Caco-2 (cell line): ENCODE measurements at regions of chr19 and their contacts with region 1.

Region 1: DNA sequence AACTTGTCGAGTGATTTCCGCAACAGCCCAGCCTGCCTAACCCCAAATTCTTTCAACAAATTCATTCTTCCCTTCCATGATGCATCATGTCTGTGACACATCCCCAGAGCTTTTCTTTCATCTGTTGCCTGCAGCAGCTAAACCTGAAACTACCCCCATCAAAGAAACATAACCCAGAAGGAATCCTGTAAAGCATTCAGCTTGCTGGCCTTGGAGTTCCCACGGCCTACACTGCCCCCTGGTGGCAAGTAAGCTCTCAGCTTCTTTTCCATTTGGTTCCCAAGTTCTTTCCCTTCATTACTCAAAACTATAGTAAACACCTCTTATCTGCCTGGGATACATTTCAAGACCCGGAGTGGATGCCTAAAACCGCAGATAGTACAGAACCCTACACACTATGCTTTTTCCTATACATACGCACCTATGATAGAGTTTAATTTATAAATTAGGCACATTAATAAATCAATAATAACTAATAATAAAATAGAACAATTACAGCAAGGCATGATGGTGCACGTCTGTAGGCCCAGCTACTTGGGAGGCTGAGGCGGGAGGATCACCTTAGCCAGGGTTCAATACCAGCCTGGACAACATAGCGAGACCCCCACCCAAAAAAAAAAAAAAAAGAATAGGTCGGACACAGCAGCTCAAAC is 7.4 kb downstream of the ETHE1 start:
- DNase-seq: peak; percentile 83 to 89
- H3K4me3 ChIP-seq: no peak overlapping the region
- H3K4me3 Mint-ChIP-seq: no peak overlapping the region
- H3K27ac Mint-ChIP-seq: peak overlapping the region; percentile 35
- H3K4me1 ChIP-seq: peaks cover 12% of the 10 kb centered on the region
- H3K4me1 Mint-ChIP-seq: peaks cover 14% of the 10 kb centered on the region
- H3K27me3 ChIP-seq: no peaks in the 10 kb centered on the region
- H3K27me3 Mint-ChIP-seq: no peaks in the 10 kb centered on the region
- CTCF ChIP-seq: peak; percentile 91

Region 2: DNA sequence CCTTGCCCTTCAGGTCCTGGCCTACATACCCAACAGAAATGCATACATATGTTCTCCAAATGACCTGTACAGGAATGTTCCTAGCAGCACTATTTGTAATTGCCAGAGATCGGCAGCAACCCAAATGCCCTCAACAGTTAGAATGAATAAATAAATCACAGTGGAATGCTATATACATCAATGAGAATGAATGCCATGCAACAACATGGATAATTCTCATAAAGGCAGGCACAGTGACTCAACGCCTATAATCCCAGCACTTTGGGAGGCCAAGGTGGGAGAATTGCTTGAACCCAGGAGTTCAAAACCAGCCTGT is 86.2 kb before region 1 on chr19:
- CTCF ChIA-PET with region 1: interaction called, 14 read pairs
- POLR2A ChIA-PET with region 1: no interaction called
- intact Hi-C with region 1: loop called (anchors 1 kb)
- DNase-seq: no peak
- H3K4me3 ChIP-seq: no peak overlapping the region
- H3K4me3 Mint-ChIP-seq: no peak overlapping the region
- H3K27ac Mint-ChIP-seq: no peak overlapping the region
- H3K4me1 ChIP-seq: no peaks in the 10 kb centered on the region
- H3K4me1 Mint-ChIP-seq: no peaks in the 10 kb centered on the region
- H3K27me3 ChIP-seq: no peaks in the 10 kb centered on the region
- H3K27me3 Mint-ChIP-seq: no peaks in the 10 kb centered on the region
- CTCF ChIP-seq: no peak

Region 3: DNA sequence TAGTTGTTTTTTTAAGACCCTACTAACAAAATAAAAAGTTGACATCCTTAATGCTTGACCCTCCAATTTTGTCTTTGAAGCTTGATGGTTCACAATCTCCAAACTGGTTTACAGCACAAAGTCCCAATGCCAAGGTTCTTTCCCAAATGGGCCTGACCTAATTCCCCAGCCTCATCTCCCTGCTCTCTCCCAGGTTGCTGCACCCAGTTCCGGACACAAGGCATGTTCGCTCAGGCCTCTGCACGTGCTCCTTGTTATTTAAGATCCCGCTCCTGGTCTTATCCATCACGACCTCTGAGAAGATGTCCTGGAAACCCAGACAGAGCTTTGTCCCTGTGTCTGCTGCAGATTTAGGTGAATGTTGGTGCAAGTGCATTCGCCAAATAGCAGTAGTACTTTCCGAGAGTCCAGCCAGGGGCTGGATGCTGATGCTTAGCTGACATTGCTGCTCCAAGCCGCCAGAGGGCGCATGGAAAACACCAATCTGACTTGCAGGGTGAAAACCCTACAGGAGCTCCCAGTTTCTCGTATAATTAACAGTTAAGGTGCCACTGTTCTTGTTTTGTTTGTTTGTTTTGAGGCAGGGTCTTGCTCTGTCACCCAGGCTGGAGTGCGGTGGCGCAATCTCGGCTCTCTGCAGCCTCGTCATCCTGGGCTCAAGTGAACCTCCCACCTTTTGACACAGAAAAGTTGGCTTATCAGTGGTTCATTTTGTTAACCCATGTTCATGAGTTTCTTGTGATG is 72.6 kb before region 1 on chr19:
- CTCF ChIA-PET with region 1: interaction called, 181 read pairs
- POLR2A ChIA-PET with region 1: interaction called, 8 read pairs
- intact Hi-C with region 1: loop called (anchors 1 kb)
- DNase-seq: peak; percentile 71 to 82
- H3K4me3 ChIP-seq: no peak overlapping the region
- H3K4me3 Mint-ChIP-seq: no peak overlapping the region
- H3K27ac Mint-ChIP-seq: no peak overlapping the region
- H3K4me1 ChIP-seq: no peaks in the 10 kb centered on the region
- H3K4me1 Mint-ChIP-seq: peaks cover 5% of the 10 kb centered on the region
- H3K27me3 ChIP-seq: no peaks in the 10 kb centered on the region
- H3K27me3 Mint-ChIP-seq: peaks cover 2% of the 10 kb centered on the region
- CTCF ChIP-seq: peak; percentile 94 to 98

Region 4: DNA sequence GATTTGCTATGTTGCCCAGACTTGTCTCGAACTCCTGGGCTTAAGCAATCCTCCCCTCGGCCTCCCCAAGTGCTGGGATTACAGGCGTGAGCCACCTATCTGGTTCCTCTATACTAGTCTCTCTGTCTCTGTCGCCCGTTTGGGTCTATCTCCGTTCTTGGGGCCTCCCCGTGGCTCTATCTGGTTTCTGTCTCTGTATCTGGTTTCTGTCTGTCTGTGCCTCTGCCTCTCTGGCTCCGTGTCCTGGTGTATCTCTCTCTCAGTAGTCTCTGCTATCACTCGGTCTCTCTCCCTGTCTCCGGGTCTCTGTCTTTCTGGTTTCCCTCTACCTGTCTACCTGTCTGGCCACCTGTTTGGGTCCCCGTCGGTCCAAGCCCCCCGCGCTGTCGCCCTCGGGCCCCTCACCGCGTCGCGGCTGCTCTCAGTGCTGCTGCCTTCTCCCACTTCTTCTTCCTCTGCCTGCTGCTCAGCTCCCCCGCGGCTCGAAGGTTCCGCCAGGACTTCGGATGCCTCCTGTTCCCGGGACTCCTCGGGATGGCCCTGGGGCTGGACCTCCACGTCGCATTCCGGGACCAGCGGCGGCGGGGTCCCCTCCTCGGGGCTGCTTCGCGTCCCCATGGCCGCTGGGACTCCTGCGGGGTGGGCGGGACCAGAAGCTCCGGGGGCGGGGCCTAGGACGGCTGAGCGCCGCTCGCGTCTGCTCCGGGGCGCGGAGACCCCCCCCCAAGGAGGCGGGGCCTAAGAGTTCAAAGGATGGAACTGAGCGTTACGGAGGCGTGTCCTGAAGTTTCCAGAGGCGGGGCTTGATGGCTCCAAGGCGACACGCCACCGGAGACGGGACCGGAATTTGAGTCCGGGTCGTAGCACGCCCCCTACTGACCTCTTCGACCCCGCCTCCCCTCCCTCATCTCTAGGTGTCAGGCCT is 15.8 kb before region 1 on chr19:
- CTCF ChIA-PET with region 1: interaction called, 24 read pairs
- POLR2A ChIA-PET with region 1: interaction called, 8 read pairs
- intact Hi-C with region 1: loop called (anchors 1 kb)
- DNase-seq: peak; percentile 98 to 99
- H3K4me3 ChIP-seq: peak overlapping the region; percentile 91
- H3K4me3 Mint-ChIP-seq: peak overlapping the region; percentile 90
- H3K27ac Mint-ChIP-seq: peak overlapping the region; percentile 92
- H3K4me1 ChIP-seq: peaks cover 25% of the 10 kb centered on the region
- H3K4me1 Mint-ChIP-seq: peaks cover 33% of the 10 kb centered on the region
- H3K27me3 ChIP-seq: no peaks in the 10 kb centered on the region
- H3K27me3 Mint-ChIP-seq: no peaks in the 10 kb centered on the region
- CTCF ChIP-seq: peak; percentile 49 to 64

Region 5: DNA sequence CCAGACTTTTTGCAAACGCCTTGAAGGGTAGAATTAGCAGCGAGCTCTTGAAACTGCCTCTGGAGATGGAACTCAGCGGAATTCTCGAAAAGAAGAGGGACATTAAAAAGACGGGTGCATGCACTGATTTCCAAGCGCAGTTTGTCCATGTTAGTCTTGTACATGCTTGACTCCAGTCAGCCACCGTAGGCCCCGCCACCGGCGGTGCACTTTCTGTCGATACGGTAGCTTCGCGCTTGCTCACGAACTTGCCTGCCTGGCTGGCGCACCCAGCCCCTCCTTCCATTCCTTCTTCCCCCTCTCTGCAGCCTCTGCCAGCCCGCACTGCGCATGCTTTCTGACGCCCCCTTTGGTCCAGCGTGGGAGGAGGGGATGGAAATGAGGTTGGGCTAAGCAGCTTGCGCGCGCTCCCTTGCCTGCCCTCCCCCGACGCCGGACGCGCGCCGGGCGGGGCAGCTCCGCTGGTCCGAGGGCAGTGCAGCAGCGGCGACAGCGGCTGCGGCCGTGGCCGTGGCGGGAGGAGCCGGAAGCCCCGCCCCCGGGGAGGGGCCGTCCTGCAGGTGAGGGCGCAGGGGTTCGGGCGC is 13.5 kb after region 1 on chr19 and contains the start of gene ZNF575:
- CTCF ChIA-PET with region 1: interaction called, 12 read pairs
- POLR2A ChIA-PET with region 1: interaction called, 4 read pairs
- intact Hi-C with region 1: no loop called
- DNase-seq: peak; percentile 95 to 96
- H3K4me3 ChIP-seq: peak within 1 kb of the TSS; percentile 60
- H3K4me3 Mint-ChIP-seq: peak within 1 kb of the TSS; percentile 96
- H3K27ac Mint-ChIP-seq: peak within 1 kb of the TSS; percentile 96
- H3K4me1 ChIP-seq: 0 out of 2 replicates have a peak, but pooled peaks cover 4% of the 10 kb centered on the region
- H3K4me1 Mint-ChIP-seq: peaks cover 6% of the 10 kb centered on the region
- H3K27me3 ChIP-seq: no peaks in the 10 kb centered on the region
- H3K27me3 Mint-ChIP-seq: no peaks in the 10 kb centered on the region
- CTCF ChIP-seq: peak in 1 of 2 experiments; percentile 9
- total RNA-seq, gene ZNF575: 1.00 and 1.2 TPM in 2 replicates